Breast epithelium (tissue), 4 donors: ENCODE measurements at regions of chr2 and their contacts with region 1.

Region 1: DNA sequence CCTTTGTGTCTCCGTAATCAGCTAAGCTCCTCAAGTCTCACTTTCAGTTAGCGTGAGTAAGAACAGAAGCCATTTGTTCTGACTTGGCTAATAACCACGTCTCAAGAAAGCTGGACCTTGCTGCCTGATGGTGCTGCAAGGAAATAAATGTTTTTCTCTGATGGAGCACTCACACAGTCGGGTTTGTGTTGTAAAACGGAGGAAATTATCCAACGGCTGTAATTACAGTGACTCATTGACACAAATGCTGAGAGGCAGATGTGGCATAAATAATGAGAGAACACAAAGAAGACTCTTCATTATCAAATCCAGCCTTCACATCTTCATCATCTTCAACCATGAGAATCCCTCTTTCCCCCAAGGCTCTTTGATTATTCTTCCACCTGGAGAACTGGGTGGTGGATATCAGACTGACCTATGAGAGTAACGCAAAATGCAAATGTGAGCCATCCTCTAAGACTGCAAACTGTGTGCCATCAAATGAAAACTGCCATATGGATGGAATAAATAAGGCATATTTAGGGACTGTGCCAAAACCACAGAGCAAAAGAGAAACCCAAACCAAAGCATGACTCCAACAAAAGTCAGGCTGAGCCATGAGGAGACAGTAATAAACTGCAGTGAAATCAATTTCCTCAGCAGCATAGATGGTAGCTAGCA is 252.6 kb downstream of the RND3 start:
- DNase-seq: no peak
- H3K4me3 ChIP-seq: peak overlapping the region in 2 of 3 donors; percentile 8 to 50
- H3K27ac ChIP-seq: peak overlapping the region; percentile 68 to 74
- H3K4me1 ChIP-seq: peaks cover 0 to 6% of the 10 kb centered on the region in 2 donors
- H3K27me3 ChIP-seq: no peaks in the 10 kb centered on the region
- CTCF ChIP-seq: no peak
- POLR2A ChIP-seq: no peak

Region 2: DNA sequence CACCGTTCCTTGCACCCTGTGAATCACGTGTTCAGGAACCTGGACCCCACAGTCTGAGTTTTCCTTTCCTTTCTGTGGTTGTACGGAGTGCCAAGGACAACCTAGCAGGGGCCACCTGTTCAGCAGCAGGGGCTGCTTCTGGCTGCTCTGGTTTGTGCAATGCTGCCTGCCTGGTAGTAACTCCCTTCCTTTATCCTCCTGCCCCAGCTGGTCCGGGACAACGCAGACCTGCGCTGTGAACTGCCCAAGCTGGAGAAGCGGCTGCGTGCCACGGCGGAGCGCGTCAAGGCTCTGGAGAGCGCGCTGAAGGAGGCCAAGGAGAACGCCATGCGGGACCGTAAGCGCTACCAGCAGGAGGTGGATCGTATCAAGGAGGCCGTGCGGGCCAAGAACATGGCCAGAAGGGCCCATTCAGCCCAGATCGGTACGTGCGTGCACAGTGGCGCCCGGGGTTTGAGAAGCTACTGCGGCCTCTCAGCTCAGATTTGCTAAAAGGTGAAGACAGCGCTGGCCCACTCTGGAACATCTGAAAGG is 1224.9 kb before region 1 on chr2:
- intact Hi-C with region 1: loop called (anchors 5 kb)
- DNase-seq: no peak
- H3K4me3 ChIP-seq: no peak overlapping the region
- H3K27ac ChIP-seq: no peak overlapping the region
- H3K4me1 ChIP-seq: peaks cover 8 to 10% of the 10 kb centered on the region in 2 donors
- H3K27me3 ChIP-seq: no peaks in the 10 kb centered on the region
- CTCF ChIP-seq: no peak
- POLR2A ChIP-seq: no peak